H1 (cell line): ENCODE measurements at regions of chr19 and their contacts with region 1.

Region 1: GRCh38 chr19:52369559-52370340 is at the start of gene ZNF880:
- DNase-seq: peak; percentile 69 to 71
- H3K4me3 ChIP-seq: peak within 1 kb of the TSS; percentile 88 to 96 (median 91)
- H3K27ac ChIP-seq: peak within 1 kb of the TSS; percentile 91
- H3K4me1 ChIP-seq: no peaks in the 10 kb centered on the region
- H3K27me3 ChIP-seq: no peaks in the 10 kb centered on the region
- CTCF ChIP-seq: no peak
- EP300 ChIP-seq: no peak
- POLR2A ChIP-seq: peak; percentile 62 to 95
- RAD21 ChIP-seq: no peak
- total RNA-seq, gene ZNF880: 8.4 and 11.4 TPM in 2 replicates

Region 2: GRCh38 chr19:52322429-52322828 is 47.3 kb before region 1 on chr19:
- CTCF ChIA-PET with region 1: no interaction called
- POLR2A ChIA-PET with region 1: no interaction called
- DNase-seq: no peak
- H3K4me3 ChIP-seq: no peak overlapping the region
- H3K27ac ChIP-seq: no peak overlapping the region
- H3K4me1 ChIP-seq: no peaks in the 10 kb centered on the region
- H3K27me3 ChIP-seq: no peaks in the 10 kb centered on the region
- CTCF ChIP-seq: no peak
- EP300 ChIP-seq: no peak
- POLR2A ChIP-seq: no peak
- RAD21 ChIP-seq: no peak

Region 3: DNA sequence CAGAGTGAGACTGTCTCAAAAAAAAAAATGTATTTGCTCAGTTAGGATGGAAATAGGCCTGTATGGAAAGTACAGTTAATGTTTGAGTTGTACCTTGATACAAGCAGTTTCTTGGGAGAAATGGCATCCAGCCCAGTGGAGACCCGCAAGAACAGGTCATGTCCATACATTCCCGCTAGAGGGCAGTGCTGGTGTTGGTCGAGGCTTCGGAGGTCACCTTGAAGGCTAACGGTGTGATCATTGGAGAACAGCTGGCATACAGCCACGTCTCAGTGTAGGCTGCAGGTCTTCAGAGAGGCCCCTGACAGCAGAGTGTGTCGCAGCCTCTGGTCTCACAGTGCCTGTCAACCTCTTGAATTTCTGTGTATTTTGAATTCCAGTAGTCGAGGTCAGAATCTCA is 26.2 kb before region 1 on chr19:
- CTCF ChIA-PET with region 1: interaction called, 21 read pairs
- POLR2A ChIA-PET with region 1: interaction called, 4 read pairs
- DNase-seq: peak; percentile 54 to 84
- H3K4me3 ChIP-seq: no peak overlapping the region
- H3K27ac ChIP-seq: no peak overlapping the region
- H3K4me1 ChIP-seq: no peaks in the 10 kb centered on the region
- H3K27me3 ChIP-seq: no peaks in the 10 kb centered on the region
- CTCF ChIP-seq: peak; percentile 81 to 96 (median 92)
- EP300 ChIP-seq: no peak
- POLR2A ChIP-seq: no peak
- RAD21 ChIP-seq: peak; percentile 87

Region 4: DNA sequence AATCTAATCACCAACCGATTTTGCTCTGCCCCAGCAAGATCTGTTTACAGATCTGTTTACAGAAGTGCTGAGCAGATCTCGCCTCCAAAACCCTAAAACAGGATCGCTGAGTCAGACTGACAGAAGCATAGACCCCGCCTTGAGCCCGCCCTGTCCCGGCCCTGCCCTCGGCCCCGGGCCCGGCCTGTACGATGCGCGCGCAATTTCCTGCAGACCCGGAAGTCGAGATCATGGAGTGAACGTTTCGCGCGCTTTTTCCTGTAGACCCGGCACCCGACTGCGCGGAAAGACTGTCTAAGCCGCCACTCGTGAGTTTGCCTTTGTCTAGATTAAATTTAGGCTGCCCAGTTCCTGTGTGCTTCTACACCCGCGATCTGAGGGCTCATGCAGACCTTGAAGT is 59.2 kb after region 1 on chr19 and contains the start of gene ZNF534:
- CTCF ChIA-PET with region 1: no interaction called
- POLR2A ChIA-PET with region 1: no interaction called
- DNase-seq: no peak
- H3K4me3 ChIP-seq: no peak within 1 kb of the TSS
- H3K27ac ChIP-seq: no peak within 1 kb of the TSS
- H3K4me1 ChIP-seq: no peaks in the 10 kb centered on the region
- H3K27me3 ChIP-seq: no peaks in the 10 kb centered on the region
- CTCF ChIP-seq: no peak
- EP300 ChIP-seq: no peak
- POLR2A ChIP-seq: no peak
- RAD21 ChIP-seq: no peak
- total RNA-seq, gene ZNF534: not detected in 2 replicates